ENCODE measurements at regions of chr16 and their contacts with region 1.

Region 1: GRCh38 chr16:84175350-84176081 is 11.3 kb downstream of the TAF1C start:
- DNase-seq: no peak
- ATAC-seq: peak; percentile 90
- H3K4me3 Mint-ChIP-seq: no peak overlapping the region
- H3K27ac Mint-ChIP-seq: no peak overlapping the region
- H3K4me1 Mint-ChIP-seq: peaks cover 5% of the 10 kb centered on the region
- H3K27me3 Mint-ChIP-seq: peaks cover 3% of the 10 kb centered on the region
- CTCF ChIP-seq: no peak

Region 2: GRCh38 chr16:83967806-83968305 is 207.7 kb before region 1 on chr16 and contains the start of gene NECAB2:
- CTCF ChIA-PET with region 1: no interaction called
- POLR2A ChIA-PET with region 1: no interaction called
- intact Hi-C with region 1: loop called (anchors 1 kb)
- DNase-seq: no peak
- ATAC-seq: peak; percentile 57
- H3K4me3 Mint-ChIP-seq: peak within 1 kb of the TSS; percentile 72
- H3K27ac Mint-ChIP-seq: no peak within 1 kb of the TSS
- H3K4me1 Mint-ChIP-seq: peaks cover 5% of the 10 kb centered on the region
- H3K27me3 Mint-ChIP-seq: peaks cover 23% of the 10 kb centered on the region
- CTCF ChIP-seq: no peak
- total RNA-seq, gene NECAB2: not detected in 2 replicates

Region 3: GRCh38 chr16:84084570-84085270 is 90.8 kb before region 1 on chr16:
- CTCF ChIA-PET with region 1: interaction called, 11 read pairs
- POLR2A ChIA-PET with region 1: interaction called, 3 read pairs
- intact Hi-C with region 1: loop called (anchors 1 kb)
- DNase-seq: peak; percentile 28
- ATAC-seq: peak; percentile 65
- H3K4me3 Mint-ChIP-seq: no peak overlapping the region
- H3K27ac Mint-ChIP-seq: no peak overlapping the region
- H3K4me1 Mint-ChIP-seq: peaks cover 45% of the 10 kb centered on the region
- H3K27me3 Mint-ChIP-seq: no peaks in the 10 kb centered on the region
- CTCF ChIP-seq: no peak

Measured in activated B cell treated with CpG ODN at 0.5 μM for 24 hours (primary cell).